Endothelial cell of umbilical vein (primary cell): ENCODE measurements at regions of chr3 and their contacts with region 1.

Region 1: DNA sequence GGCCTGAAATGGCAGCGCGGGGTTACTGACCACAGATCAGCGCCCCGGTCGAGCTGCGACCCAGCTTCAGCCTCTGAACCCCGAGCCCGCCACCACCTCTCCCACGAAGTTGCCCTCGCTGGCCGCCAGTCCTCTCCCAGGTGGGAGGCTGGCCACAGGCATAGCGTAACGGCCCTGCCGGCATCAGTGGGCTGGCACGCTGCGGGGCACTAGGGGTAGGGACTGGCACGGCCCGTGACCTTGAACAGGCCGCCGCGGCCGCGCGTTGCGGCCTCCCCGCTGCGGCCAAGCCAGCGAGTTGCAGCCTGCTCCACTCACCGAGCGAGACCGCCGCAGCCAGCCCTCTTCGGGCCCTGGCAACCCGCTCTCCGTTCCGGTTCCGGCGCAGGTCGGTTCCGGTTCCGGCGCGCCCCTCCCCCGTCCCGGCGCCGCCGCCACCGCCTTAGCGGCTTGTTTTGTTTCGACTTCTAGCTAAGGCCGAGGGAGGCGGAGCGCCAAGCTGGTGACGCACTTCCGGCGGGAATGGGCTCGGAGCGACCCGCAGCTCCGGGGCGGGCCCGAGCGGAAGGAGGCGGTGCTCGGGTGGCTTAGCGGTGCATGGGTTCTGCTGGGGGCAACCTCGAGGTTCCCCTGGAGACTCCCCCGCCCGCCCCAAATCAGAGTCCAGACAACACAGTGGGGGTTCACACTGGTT is at the start of gene USP19:
- DNase-seq: peak; percentile 94
- H3K4me3 ChIP-seq: peak within 1 kb of the TSS; percentile 44 to 71 (median 65)
- H3K27ac ChIP-seq: peak within 1 kb of the TSS; percentile 58
- H3K4me1 ChIP-seq: peaks cover 12% of the 10 kb centered on the region
- H3K27me3 ChIP-seq: no peaks in the 10 kb centered on the region
- CTCF ChIP-seq: no peak
- POLR2A ChIP-seq: peak; percentile 92
- total RNA-seq, gene USP19: 39.1 and 42.2 TPM in 2 replicates

Region 2: DNA sequence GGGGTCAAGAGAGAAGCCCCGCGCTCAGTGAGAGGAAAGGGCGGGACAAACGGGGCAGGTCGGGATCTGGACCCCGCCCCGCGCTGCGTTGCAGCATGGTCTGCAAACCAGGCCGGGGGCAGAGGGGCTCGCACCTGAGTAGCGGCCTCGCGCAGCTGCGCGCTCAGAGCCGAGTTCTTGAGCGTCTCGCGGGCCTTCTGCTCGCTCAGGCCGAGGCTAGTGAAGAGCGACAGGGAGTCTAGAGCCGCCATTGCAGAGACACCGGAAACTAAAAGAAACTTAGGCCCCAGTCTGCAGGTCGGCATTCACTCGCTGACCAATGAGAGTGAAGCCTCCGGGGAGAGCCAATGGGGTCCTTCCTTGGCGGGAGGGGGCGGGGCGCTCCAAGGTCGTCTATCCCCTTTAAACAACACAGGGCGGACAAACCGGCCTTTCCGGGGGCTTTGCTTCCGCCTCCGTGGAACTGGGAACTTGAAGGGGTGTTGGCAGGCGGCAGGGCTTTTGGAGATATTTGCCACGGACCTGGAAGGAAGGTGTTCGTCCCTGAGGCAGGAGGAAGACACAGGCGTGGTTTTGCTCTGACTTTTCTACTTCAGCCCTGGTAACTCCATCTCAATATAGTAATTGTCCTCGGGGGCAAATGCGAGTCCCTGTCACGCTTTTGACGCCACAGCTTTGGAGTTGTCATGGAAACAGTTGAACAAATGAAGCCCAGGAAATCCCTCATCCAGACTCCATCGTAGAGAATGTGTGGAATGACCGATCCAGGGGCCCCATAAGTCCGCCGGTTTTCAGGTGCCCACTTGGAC is 15.9 kb before region 1 on chr3 and contains the start of gene QARS1:
- CTCF ChIA-PET with region 1: no interaction called
- POLR2A ChIA-PET with region 1: no interaction called
- dilution Hi-C with region 1: no loop called
- intact Hi-C with region 1: loop called (anchors 1 kb)
- DNase-seq: peak; percentile 94
- H3K4me3 ChIP-seq: peak within 1 kb of the TSS; percentile 67 to 90 (median 85)
- H3K27ac ChIP-seq: peak within 1 kb of the TSS; percentile 72
- H3K4me1 ChIP-seq: peaks cover 9% of the 10 kb centered on the region
- H3K27me3 ChIP-seq: no peaks in the 10 kb centered on the region
- CTCF ChIP-seq: no peak
- POLR2A ChIP-seq: peak; percentile 90
- total RNA-seq, gene QARS1: 261 and 285 TPM in 2 replicates

Region 3: DNA sequence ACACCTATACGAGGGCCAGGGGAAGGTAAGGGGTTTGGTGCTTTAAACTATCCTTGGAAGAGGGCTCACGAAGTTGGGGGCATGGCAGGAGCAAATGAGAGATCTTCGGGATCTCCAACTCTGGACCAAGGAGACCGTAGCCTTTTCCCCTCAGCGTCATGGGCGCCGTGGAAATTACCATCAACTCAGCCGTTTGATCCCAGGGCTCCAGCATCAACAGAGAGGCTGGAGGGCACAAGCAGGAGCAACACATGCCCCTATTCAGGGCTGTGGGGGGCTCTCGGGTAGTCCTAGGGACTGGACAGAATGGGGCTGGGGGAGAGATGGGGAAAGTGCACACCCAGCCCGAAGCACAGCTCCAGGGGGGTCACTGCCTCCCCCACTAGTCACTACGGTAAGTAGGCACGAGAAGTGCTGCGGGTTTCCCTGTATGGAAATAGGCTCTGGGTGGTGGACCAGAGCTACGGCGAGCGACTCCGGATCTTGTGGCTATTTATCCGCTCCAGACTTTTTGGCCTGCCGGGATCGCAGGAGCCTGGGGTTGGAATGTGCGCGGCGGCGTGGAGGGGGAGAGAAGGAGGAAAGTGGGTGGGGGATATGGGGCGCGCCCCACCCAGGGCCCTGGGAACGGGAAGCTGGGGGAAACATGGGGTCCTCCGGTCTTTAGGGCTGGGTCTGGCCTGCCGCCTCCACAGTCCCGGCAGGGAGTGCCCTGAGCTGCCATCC is 12.8 kb after region 1 on chr3:
- CTCF ChIA-PET with region 1: interaction called, 19 read pairs
- POLR2A ChIA-PET with region 1: no interaction called
- dilution Hi-C with region 1: no loop called
- intact Hi-C with region 1: loop called (anchors 1 kb)
- DNase-seq: peak; percentile 92
- H3K4me3 ChIP-seq: peak overlapping the region; percentile 58 to 89 (median 83)
- H3K27ac ChIP-seq: peak overlapping the region; percentile 58
- H3K4me1 ChIP-seq: peaks cover 14% of the 10 kb centered on the region
- H3K27me3 ChIP-seq: no peaks in the 10 kb centered on the region
- CTCF ChIP-seq: no peak
- POLR2A ChIP-seq: peak; percentile 76